ENCODE measurements at regions of chr13 and their contacts with region 1.

Region 1: GRCh38 chr13:20828539-20829364 is 55.0 kb upstream of the EEF1AKMT1 start:
- DNase-seq: peak in 1 of 2 donors; percentile 81
- ATAC-seq: peak; percentile 82 to 94 (median 87)
- H3K4me3 ChIP-seq: no peak overlapping the region
- H3K4me3 Mint-ChIP-seq: peak overlapping the region; percentile 55
- H3K27ac ChIP-seq: no peak overlapping the region
- H3K27ac Mint-ChIP-seq: peak overlapping the region; percentile 62 to 72
- H3K4me1 ChIP-seq: no peaks in the 10 kb centered on the region
- H3K4me1 Mint-ChIP-seq: peaks cover 7 to 8% of the 10 kb centered on the region in 2 donors
- H3K27me3 ChIP-seq: no peaks in the 10 kb centered on the region
- H3K27me3 Mint-ChIP-seq: no peaks in the 10 kb centered on the region
- CTCF ChIP-seq: peak; percentile 77

Region 2: DNA sequence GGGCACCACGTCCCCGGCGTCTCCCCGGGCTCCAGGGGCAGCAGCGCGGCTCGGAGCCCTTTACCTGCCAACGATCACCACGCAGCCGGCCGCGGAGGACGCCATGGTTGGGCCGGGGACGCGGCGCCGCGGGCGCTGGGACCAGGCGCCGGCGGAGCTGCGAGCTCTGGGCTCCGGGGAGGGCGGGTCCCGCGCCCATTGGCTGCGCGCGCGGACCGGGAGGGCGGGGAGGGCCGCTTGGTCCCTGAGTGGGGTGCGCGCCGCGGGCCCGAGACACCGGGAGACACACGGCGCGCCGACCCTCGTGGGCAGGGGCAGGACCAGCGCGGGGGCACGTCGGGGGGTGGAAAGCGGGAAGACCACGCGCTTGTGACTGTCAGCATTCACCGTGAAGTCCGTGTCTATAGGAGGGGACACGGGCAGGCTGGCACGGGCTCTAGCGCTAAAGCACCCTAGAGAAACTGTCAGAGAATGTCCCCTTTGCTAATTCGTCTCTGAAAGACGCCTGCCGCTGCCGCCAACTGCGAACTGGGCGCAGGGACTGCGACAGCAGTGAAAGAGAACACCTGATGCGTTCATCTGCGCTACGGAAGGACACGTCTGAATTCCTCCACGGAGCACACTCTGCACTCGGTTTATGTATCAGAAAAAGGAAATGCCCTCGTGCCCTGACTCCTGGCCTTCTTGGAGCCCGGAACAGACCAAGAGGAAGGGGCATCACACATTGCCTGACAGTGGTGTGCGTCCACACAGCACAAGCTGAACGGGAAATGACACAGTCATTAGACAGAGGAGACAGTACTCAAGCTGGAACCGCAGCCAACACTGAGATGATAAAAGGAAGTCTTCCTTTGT is 302.8 kb before region 1 on chr13 and contains the start of gene CRYL1:
- intact Hi-C with region 1: no loop called
- DNase-seq: peak; percentile 64 to 84
- ATAC-seq: peak; percentile 87 to 91 (median 91)
- H3K4me3 ChIP-seq: peak within 1 kb of the TSS; percentile 71
- H3K4me3 Mint-ChIP-seq: peak within 1 kb of the TSS; percentile 88
- H3K27ac ChIP-seq: peak within 1 kb of the TSS; percentile 73
- H3K27ac Mint-ChIP-seq: peak within 1 kb of the TSS; percentile 75 to 77
- H3K4me1 ChIP-seq: peaks cover 19% of the 10 kb centered on the region
- H3K4me1 Mint-ChIP-seq: peaks cover 16 to 18% of the 10 kb centered on the region in 2 donors
- H3K27me3 ChIP-seq: no peaks in the 10 kb centered on the region
- H3K27me3 Mint-ChIP-seq: peaks cover 4 to 10% of the 10 kb centered on the region in 2 donors
- CTCF ChIP-seq: no peak
- total RNA-seq, gene CRYL1: 13.4 to 15.8 (median 14.9) TPM

Region 3: DNA sequence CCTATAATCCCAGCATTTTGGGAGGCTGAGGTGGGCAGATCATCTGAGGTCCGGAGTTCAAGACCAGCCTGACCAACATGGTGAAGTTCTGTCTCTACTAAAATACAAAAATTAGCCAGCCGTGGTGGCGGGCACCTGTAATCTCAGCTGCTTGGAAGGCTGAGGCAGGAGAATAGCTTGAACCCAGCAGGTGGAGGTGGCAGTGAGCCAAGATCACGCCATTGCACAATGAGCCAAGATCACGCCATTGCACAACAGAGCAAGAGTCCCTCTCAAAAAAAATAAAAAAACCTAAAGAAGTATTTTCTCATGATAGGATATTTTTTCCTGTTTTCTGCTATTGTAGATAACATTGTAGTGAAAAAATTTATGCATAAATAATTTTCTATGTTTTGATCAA is 248.5 kb before region 1 on chr13:
- intact Hi-C with region 1: no loop called
- DNase-seq: no peak
- ATAC-seq: no peak
- H3K4me3 ChIP-seq: no peak overlapping the region
- H3K4me3 Mint-ChIP-seq: no peak overlapping the region
- H3K27ac ChIP-seq: no peak overlapping the region
- H3K27ac Mint-ChIP-seq: no peak overlapping the region
- H3K4me1 ChIP-seq: no peaks in the 10 kb centered on the region
- H3K4me1 Mint-ChIP-seq: no peaks in the 10 kb centered on the region
- H3K27me3 ChIP-seq: no peaks in the 10 kb centered on the region
- H3K27me3 Mint-ChIP-seq: no peaks in the 10 kb centered on the region
- CTCF ChIP-seq: no peak

Region 4: GRCh38 chr13:20711301-20712044 is 117.3 kb before region 1 on chr13:
- intact Hi-C with region 1: loop called (anchors 1 kb)
- DNase-seq: peak in 1 of 2 donors; percentile 17
- ATAC-seq: no peak
- H3K4me3 ChIP-seq: no peak overlapping the region
- H3K4me3 Mint-ChIP-seq: no peak overlapping the region
- H3K27ac ChIP-seq: no peak overlapping the region
- H3K27ac Mint-ChIP-seq: no peak overlapping the region
- H3K4me1 ChIP-seq: peaks cover 7% of the 10 kb centered on the region
- H3K4me1 Mint-ChIP-seq: peaks cover 7 to 9% of the 10 kb centered on the region in 2 donors
- H3K27me3 ChIP-seq: no peaks in the 10 kb centered on the region
- H3K27me3 Mint-ChIP-seq: peaks cover 18 to 24% of the 10 kb centered on the region in 2 donors
- CTCF ChIP-seq: no peak